Mammary epithelial cell (primary cell): ENCODE measurements at regions of chr11 and their contacts with region 1.

Region 1: GRCh38 chr11:47399860-47400767 is 8.3 kb upstream of the SLC39A13 start:
- DNase-seq: no peak
- H3K4me3 ChIP-seq: peak overlapping the region in 2 of 3 experiments; percentile 16 to 30
- H3K27ac ChIP-seq: no peak overlapping the region
- H3K4me1 ChIP-seq: peaks cover 19% of the 10 kb centered on the region
- H3K27me3 ChIP-seq: no peaks in the 10 kb centered on the region
- CTCF ChIP-seq: no peak

Region 2: DNA sequence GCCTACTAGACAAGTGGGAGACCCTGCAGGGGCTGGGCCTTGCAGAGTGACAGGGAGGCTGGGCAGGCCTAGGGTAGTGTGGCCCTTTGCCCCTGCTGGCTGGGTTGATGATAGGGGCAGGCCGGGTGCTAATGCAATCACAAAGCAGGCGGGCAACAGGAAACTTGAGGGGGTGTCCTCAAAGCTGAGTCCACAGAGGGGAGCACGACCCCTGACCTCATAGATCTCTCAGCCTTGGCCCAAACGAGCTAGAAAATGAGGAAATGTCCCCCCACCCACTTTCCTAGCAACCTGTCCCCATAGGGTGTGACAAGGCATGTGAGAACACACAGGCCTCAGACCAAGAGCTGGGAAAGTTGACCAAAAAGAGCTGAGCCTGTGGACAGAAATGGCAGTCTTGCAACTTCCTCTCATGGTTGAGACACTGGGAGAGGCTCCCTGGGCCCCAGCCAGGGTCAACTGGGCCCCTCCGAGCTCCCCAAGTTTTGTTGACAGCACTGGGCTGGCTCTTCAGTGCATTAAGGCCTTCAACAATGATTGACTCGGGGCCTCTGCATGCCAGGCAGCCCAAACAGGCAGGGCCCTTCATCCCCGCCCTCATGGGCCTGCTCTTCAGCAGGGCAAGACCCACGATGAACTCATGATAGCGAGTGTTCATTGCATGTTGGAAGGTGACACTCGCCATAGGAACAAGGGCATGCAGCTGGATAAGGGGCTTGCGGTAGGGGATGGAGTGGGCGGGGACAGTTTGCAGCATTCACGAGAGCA is 12.0 kb before region 1 on chr11:
- CTCF ChIA-PET with region 1: no interaction called
- dilution Hi-C with region 1: no loop called
- in situ Hi-C with region 1: no loop called
- intact Hi-C with region 1: no loop called
- DNase-seq: no peak
- H3K4me3 ChIP-seq: no peak overlapping the region
- H3K27ac ChIP-seq: no peak overlapping the region
- H3K4me1 ChIP-seq: peaks cover 12% of the 10 kb centered on the region
- H3K27me3 ChIP-seq: no peaks in the 10 kb centered on the region
- CTCF ChIP-seq: no peak

Region 3: DNA sequence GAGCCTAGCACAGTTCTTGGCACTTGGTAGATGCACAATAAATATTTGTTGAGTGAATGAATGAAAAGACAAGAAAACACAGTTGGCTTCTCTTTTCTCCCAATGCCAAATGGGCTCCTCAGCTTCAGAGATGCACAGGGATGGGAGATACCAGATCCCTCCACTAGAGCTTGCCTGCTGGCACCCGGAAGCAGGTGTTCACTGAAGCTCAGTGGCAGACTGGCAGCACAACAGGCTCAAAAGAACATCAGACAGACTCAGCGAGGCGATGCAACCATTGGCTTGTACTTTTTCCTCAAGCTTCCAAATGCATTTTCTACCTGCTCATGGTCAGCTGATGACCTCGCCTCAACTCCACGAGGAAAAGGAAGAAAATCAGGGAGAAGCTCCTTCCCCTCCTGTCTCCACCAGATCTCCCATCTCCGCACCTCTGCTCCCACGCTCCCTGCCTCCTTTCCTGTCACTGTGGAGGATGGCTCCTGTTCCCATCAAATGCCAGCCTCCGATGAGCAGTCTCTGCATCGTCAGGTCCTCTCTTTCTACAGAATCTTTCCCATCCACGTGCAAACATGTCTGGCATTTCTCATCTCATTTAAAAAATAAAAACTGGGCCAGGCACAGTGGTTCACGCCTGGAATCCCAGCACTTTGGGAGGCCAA is 43.1 kb after region 1 on chr11:
- CTCF ChIA-PET with region 1: no interaction called
- dilution Hi-C with region 1: loop called (anchors 5 kb)
- in situ Hi-C with region 1: no loop called
- intact Hi-C with region 1: no loop called
- DNase-seq: no peak
- H3K4me3 ChIP-seq: no peak overlapping the region
- H3K27ac ChIP-seq: no peak overlapping the region
- H3K4me1 ChIP-seq: no peaks in the 10 kb centered on the region
- H3K27me3 ChIP-seq: no peaks in the 10 kb centered on the region
- CTCF ChIP-seq: no peak